ENCODE measurements at regions of chr11 and their contacts with region 1.

Region 1: GRCh38 chr11:8314916-8315445 is 51.3 kb upstream of the LMO1 start:
- DNase-seq: no peak
- H3K4me3 ChIP-seq: no peak overlapping the region
- H3K27ac ChIP-seq: no peak overlapping the region
- H3K27me3 ChIP-seq: peaks cover 32% of the 10 kb centered on the region
- CTCF ChIP-seq: no peak

Region 2: DNA sequence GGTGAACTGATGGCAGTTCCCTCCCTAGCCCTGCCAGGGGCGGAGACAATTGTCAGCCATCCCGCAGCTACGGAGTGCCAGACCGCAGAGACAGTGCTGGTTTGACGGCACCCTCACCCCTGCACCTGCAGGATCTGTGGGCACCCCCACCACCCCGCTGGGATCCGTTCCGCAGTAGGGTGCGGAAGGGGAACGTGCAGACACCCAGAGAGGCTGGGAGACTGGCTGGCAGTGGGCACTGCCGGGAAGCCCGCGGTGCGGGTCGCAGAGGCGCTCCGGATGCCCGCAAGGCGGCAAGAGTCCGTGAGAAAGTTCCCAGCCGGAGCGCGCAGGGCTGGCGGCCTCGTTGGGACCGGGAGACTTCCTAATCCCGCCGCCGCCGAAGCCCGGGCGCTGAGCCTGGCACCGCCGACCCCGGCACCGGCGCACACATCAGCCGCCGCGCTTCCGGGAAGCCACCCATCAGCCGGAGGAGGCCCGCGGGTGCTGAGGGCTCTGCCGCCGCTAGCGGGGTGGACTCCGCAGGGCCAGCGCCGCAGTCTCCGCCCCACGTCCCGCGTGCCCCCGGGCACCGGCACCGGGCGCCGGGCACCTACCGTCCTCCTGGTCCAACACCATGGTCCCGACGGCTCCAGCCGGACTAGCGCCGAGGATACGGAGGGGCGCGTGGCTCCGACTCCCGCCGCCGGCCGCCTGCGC is 47.0 kb before region 1 on chr11:
- CTCF ChIA-PET with region 1: no interaction called
- POLR2A ChIA-PET with region 1: no interaction called
- DNase-seq: no peak
- H3K4me3 ChIP-seq: no peak overlapping the region
- H3K27ac ChIP-seq: no peak overlapping the region
- H3K27me3 ChIP-seq: peaks cover 71% of the 10 kb centered on the region
- CTCF ChIP-seq: no peak

Region 3: GRCh38 chr11:8283465-8284230 is 31.3 kb before region 1 on chr11:
- CTCF ChIA-PET with region 1: interaction called, 11 read pairs
- POLR2A ChIA-PET with region 1: no interaction called
- DNase-seq: no peak
- H3K4me3 ChIP-seq: no peak overlapping the region
- H3K27ac ChIP-seq: no peak overlapping the region
- H3K27me3 ChIP-seq: peaks cover 12% of the 10 kb centered on the region
- CTCF ChIP-seq: no peak

Measured in AG04450 (cell line).